Heart right ventricle (tissue), 16 donors: ENCODE measurements at regions of chr3 and their contacts with region 1.

Region 1: GRCh38 chr3:9932843-9933560 is 632 bp upstream of the CRELD1 start:
- DNase-seq: peak; percentile 80 to 85
- ATAC-seq: peak; percentile 76 to 89 (median 82)
- H3K4me3 ChIP-seq: peak overlapping the region; percentile 58 to 91 (median 76)
- H3K27ac ChIP-seq: peak overlapping the region; percentile 78 to 98 (median 96)
- H3K4me1 ChIP-seq: peaks cover 7 to 41% (median 30%) of the 10 kb centered on the region in 9 donors
- H3K27me3 ChIP-seq: no peaks in the 10 kb centered on the region
- CTCF ChIP-seq: peak; percentile 35 to 84 (median 69)

Region 2: DNA sequence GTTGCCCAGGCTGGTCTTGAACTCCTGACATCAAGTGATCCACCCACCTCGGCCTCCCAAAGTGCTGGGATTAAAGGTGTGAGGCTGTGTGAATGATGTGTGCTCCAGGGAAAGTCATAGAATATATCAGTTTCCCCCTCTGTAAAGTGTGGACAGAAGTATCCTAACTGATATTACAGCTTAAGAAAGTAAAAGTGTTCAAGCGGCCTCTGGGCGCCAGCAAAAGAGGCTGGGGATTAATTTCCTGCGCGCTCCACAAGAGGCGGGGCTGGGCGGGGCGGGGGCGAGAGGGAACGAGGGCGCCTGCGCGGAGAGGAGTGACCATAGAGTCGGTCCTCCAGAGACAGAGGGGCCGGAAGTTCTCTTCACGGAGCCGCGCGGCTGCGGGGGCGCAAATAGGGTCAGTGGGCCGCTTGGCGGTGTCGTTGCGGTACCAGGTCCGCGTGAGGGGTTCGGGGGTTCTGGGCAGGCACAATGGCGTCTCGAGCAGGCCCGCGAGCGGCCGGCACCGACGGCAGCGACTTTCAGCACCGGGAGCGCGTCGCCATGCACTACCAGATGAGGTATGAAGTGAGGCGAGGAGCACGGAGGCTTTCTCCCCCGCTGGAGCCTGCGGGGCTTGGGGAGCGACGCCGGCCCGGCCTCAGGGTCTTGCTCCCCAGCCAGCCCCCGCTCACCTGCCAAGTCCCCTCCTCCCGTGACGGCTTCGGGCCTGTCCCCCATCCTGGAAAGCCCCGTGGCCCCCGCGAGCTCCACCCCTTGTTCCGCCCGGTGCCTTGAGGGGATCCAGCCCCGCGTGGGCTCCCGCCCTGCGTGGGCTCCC is 42.5 kb before region 1 on chr3 and contains the start of gene JAGN1:
- intact Hi-C with region 1: loop called in 1 of 10 experiments (anchors 2 kb)
- DNase-seq: peak; percentile 91 to 92
- ATAC-seq: peak; percentile 98 to 99 (median 98)
- H3K4me3 ChIP-seq: peak within 1 kb of the TSS; percentile 61 to 99 (median 94)
- H3K27ac ChIP-seq: peak within 1 kb of the TSS; percentile 86 to 99 (median 96)
- H3K4me1 ChIP-seq: peaks cover 3 to 34% (median 16%) of the 10 kb centered on the region in 9 donors
- H3K27me3 ChIP-seq: no peaks in the 10 kb centered on the region
- CTCF ChIP-seq: peak in 5 of 9 donors; percentile 4 to 20 (median 11)
- total RNA-seq, gene JAGN1: 13.8 to 25.0 (median 18.0) TPM

Region 3: DNA sequence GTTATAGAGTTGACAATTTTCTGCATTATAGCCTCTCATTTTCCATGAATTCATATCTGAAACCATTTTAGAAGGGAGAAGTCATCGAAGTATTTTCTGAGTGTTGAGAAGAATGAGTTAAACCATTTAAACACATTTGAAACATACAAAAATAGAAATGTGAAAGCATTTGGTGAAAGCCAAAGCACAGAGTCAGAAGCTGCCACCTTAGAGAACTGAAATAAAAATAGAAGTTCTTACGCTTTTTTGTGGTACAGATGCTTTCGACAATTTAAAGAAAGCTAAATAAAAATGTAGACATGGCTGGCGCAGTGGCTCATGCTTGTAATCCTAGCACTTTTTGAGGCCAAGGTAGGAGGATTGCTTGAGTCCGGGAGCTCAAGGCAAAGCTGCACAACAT is 166.0 kb after region 1 on chr3:
- intact Hi-C with region 1: no loop called
- DNase-seq: no peak
- ATAC-seq: no peak
- H3K4me3 ChIP-seq: no peak overlapping the region
- H3K27ac ChIP-seq: no peak overlapping the region
- H3K4me1 ChIP-seq: no peaks in the 10 kb centered on the region
- H3K27me3 ChIP-seq: no peaks in the 10 kb centered on the region
- CTCF ChIP-seq: no peak

Region 4: GRCh38 chr3:10115326-10116137 is 182.5 kb after region 1 on chr3 and contains the start of gene BRK1:
- intact Hi-C with region 1: loop called in 1 of 10 experiments (anchors 10 kb)
- DNase-seq: peak; percentile 94 to 95
- ATAC-seq: peak; percentile 100
- H3K4me3 ChIP-seq: peak within 1 kb of the TSS; percentile 77 to 97 (median 84)
- H3K27ac ChIP-seq: peak within 1 kb of the TSS in 9 of 10 donors; percentile 66 to 90 (median 83)
- H3K4me1 ChIP-seq: peaks cover 3 to 44% (median 31%) of the 10 kb centered on the region in 9 donors
- H3K27me3 ChIP-seq: no peaks in the 10 kb centered on the region
- CTCF ChIP-seq: no peak
- total RNA-seq, gene BRK1: 80.3 to 101 (median 94.8) TPM